Activated CD8-positive, alpha-beta T cell treated with anti-CD3 and anti-CD28 coated beads for 36 hours (primary cell): ENCODE measurements at regions of chr19 and their contacts with region 1.

Region 1: GRCh38 chr19:1863726-1864480 is 524 bp upstream of the KLF16 start:
- DNase-seq: peak; percentile 95
- ATAC-seq: peak; percentile 80
- H3K4me3 Mint-ChIP-seq: peak overlapping the region; percentile 76
- H3K27ac Mint-ChIP-seq: peak overlapping the region; percentile 82
- H3K4me1 Mint-ChIP-seq: peaks cover 32% of the 10 kb centered on the region
- H3K27me3 Mint-ChIP-seq: no peaks in the 10 kb centered on the region
- CTCF ChIP-seq: no peak

Region 2: DNA sequence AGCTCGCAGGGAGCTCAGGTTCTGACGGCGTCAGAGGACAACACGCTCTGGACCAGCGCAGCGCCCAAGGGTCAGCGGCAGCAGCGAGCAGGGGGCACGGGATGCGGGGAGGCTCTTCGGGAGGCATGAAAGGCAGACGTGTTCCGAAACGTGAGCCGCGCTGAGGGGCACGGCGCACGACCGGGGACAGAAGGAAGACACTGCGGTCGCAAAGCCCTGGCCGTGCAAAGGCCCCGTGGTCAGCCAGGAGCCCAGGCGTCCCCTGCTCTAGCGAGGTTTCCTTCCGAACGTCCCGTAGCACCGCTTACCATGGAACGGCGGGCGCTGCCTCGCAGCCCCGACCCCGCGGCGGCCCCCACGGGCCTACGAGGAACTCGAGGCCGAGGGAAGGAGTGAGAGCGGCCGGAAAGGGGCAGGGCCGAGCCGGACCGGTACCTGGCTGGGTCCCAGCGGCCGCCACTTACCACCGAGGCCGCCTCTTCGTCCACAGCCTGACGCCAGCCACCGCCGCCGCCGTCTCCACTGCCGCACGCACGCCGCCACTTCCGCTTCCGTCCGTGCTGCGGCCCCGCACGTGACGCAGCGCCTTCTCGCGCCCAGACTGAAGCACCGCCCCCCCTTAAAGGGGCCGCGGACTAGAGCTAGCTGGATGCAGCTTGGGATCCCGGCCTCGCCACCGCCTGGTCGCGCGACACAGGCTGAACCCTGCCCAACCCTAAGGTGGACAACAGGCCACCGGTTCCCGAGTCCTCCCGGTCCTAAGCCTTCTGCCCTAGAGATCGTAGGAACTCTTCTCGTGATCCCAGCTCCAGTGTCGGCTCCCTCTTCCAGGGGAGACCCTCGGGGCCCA is 12.0 kb after region 1 on chr19:
- CTCF ChIA-PET with region 1: interaction called, 7 read pairs
- POLR2A ChIA-PET with region 1: interaction called, 39 read pairs
- intact Hi-C with region 1: no loop called
- DNase-seq: peak; percentile 94
- ATAC-seq: peak; percentile 93
- H3K4me3 Mint-ChIP-seq: peak overlapping the region; percentile 99
- H3K27ac Mint-ChIP-seq: peak overlapping the region; percentile 97
- H3K4me1 Mint-ChIP-seq: peaks cover 29% of the 10 kb centered on the region
- H3K27me3 Mint-ChIP-seq: no peaks in the 10 kb centered on the region
- CTCF ChIP-seq: no peak